Calu3 (cell line): ENCODE measurements at regions of chr7 and their contacts with region 1.

Region 1: GRCh38 chr7:48880851-48881250 is 43.5 kb upstream of the CDC14C start:
- DNase-seq: no peak
- H3K4me3 Mint-ChIP-seq: no peak overlapping the region
- H3K27ac Mint-ChIP-seq: no peak overlapping the region
- H3K4me1 Mint-ChIP-seq: no peaks in the 10 kb centered on the region
- H3K27me3 Mint-ChIP-seq: no peaks in the 10 kb centered on the region
- CTCF ChIP-seq: no peak

Region 2: DNA sequence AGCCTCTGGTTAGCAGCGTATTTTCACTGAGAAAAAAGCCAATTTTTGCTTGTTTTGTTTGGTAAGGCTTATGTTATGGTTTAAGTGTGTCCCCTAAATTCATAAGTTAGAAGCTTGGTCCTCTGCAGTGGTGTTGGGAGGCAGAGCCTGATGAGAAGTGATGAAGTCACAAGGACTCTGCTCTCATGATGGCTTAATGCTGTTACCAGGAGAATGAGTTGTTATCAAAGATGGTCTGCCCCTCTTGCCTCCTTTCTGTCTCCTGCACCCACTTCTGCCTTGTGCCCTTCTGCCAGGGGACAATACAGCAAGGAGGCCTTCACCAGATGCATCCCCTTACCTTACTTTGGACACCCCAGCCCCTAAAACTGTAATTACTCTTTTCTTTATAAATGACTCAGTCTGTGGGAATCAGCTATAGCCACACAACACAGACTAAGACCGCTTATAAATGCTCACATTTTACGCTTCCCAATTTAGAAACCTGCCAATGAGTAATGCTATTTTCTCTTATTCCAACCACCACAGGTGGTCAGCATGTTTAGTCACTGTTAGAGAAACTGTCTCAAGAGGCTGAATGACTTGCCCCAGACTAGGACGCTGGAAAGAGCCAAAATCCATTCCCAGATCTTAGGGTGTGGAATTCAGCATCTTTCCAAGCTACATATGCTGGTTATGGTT is 926.5 kb before region 1 on chr7:
- CTCF ChIA-PET with region 1: no interaction called
- intact Hi-C with region 1: loop called (anchors 5 kb)
- DNase-seq: no peak
- H3K4me3 Mint-ChIP-seq: no peak overlapping the region
- H3K27ac Mint-ChIP-seq: no peak overlapping the region
- H3K4me1 Mint-ChIP-seq: no peaks in the 10 kb centered on the region
- H3K27me3 Mint-ChIP-seq: no peaks in the 10 kb centered on the region
- CTCF ChIP-seq: no peak